GM10248 (cell line): ENCODE measurements at regions of chr21 and their contacts with region 1.

Region 1: GRCh38 chr21:41283211-41283818 is 33.3 kb upstream of the FAM3B start:
- DNase-seq: peak; percentile 77
- CTCF ChIP-seq: peak; percentile 83

Region 2: DNA sequence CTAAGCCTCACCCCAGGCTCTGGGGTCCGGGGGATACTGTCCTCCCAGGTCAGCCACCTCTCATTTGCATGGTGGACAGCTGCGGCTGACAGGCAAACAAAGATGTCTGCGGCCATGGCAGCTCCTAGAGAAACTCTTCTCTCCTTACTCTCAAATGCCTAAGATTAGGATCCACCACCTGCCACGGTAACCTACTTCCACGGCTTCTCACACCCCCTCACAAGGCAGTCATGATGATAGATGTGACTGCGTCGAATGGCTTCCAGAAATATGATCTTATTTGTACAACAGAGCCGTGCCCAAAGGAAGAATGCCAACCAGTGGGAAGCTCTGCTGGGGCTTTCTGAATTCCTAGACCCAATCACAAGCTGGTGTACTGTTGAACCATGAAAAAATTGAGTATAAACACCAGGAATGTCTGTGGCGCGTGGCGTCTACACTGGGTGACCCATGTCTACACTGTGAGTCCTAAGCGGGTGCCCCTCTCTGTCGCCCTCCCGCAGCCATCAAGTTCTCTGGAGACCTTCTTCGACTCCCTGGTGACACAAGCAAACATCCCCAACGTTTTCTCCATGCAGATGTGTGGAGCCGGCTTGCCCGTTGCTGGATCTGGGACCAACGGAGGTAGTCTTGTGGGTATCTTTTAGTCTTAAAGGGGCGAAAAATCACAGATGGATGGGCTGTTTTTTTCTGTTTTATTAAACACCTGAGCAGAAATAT is 41.8 kb before region 1 on chr21:
- CTCF ChIA-PET with region 1: no interaction called
- POLR2A ChIA-PET with region 1: no interaction called
- DNase-seq: no peak
- CTCF ChIP-seq: no peak

Region 3: DNA sequence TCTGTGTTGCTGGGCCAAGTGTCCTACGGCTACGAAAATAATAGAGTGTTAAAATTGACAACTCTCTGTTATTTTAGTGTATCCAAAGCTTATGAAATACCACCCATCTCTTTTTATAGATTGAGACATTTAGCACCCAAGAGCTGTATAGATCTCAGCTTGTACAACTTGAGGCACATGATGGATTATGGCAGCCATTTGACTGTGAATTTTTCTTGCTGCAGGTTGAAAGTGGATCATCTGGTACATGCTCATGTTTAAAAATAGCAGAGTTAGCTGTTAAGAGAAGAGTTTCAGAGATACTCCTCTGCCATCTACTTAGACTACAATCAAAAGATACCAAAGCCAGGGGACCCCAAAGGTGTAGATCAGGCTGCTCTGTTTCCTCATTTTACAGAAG is 16.0 kb before region 1 on chr21:
- CTCF ChIA-PET with region 1: interaction called, 11 read pairs
- POLR2A ChIA-PET with region 1: no interaction called
- DNase-seq: no peak
- CTCF ChIP-seq: no peak

Region 4: GRCh38 chr21:41369105-41369919 is 86.0 kb after region 1 on chr21:
- CTCF ChIA-PET with region 1: interaction called, 16 read pairs
- POLR2A ChIA-PET with region 1: interaction called, 3 read pairs
- DNase-seq: peak; percentile 74
- CTCF ChIP-seq: peak; percentile 29

Region 5: DNA sequence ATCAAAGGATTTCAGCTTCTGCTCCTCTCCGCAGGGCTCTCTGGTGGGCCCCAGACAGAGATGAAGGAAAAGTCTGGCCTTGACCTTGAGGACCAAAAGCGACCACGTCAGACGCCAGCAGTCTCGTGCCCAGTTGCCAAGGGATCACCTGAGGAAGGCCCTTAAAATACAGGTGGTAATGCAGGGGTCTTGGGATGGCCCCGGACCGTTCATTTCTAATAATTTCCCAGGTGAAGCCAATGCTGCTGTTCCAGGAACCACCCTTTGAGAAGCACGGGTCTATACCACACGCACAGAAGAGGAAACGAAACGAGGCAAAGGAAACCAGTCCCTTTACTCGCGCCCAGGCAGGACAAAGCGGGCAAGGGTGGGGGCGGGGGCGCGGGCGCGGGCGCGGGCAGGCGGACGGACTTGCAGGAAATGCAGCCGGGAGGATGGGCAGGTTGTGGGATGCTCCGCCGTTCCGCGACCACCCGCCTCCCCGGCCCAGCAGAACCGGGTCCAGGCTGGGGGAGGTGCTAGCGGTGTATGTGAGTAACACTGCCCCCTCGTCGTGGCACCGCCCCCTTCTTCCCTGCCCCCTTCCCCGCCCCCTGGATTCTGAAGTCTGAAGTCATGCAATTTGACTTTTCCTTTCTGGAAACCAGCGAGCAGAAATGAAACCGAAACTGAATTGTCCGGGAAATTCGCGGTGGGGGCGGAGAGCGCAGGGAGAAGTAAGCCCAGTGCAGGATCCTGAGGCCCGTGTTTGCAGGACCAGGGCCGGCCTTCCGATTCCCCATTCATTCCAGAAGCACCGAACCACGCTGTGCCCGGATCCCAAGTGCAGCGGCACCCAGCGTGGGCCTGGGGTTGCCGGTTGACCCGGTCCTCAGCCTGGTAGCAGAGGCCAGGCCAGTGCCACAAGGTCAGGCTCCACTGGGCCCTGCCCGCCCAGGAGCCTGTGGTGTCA is 136.9 kb after region 1 on chr21:
- CTCF ChIA-PET with region 1: interaction called, 13 read pairs
- POLR2A ChIA-PET with region 1: no interaction called
- DNase-seq: peak; percentile 55
- CTCF ChIP-seq: no peak

Region 6: DNA sequence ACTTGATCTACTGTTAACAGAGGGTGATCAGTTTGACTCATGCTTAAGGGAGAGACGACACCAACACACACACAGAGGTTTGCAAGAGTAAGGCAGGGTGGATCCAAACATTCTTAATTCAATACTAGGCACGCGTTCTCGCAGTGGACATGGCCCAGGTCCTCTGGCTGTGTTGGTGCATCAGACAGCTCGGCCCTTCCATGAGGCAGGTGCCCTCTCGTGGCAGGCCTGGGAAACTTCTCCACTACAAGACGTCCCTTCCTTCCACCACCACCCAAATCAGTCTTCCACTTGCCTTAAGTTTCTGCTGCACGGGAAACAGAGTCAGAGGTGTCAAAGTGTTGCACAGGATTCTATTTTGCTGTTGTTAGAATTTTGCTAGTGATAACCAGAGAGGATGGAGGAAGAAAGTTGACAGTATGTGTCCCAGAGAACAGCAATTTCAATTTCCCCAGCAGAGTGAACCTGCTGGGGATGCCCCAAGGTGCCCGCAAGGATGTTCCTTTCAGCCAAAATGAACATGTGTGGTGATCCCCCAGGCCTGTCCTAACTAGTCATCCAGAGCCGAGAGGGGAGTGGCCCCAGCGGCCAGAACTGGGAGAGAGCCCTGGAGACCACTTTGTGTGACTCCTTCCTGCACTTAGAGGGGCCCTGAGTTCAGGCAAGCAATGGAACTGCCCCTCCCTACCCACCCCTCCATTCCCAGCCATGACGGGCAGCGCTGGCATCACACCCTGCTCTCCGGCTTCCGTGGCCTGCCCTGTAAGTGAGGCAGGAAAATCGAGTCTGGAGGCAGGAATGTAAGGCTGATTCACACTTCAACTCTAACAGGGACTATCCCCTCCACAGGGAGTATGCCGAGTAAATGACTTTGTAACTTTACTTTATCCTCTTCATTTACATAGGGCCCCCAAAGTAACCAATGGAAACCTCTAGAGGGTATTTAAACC is 177.5 kb after region 1 on chr21:
- CTCF ChIA-PET with region 1: interaction called, 90 read pairs
- POLR2A ChIA-PET with region 1: no interaction called
- DNase-seq: peak; percentile 79
- CTCF ChIP-seq: peak; percentile 81

Region 7: GRCh38 chr21:41816220-41817165 is 533.2 kb after region 1 on chr21:
- CTCF ChIA-PET with region 1: interaction called, 26 read pairs
- POLR2A ChIA-PET with region 1: no interaction called
- DNase-seq: peak; percentile 86
- CTCF ChIP-seq: peak; percentile 91